Spleen (tissue), 13 donors: ENCODE measurements at regions of chr18 and their contacts with region 1.

Region 1: GRCh38 chr18:55433648-55434047 is 154.3 kb downstream of the TCF4 start:
- DNase-seq: no peak
- H3K4me3 ChIP-seq: no peak overlapping the region
- H3K27ac ChIP-seq: no peak overlapping the region
- H3K4me1 ChIP-seq: peaks cover 0 to 11% (median 2%) of the 10 kb centered on the region in 6 donors
- H3K27me3 ChIP-seq: no peaks in the 10 kb centered on the region
- CTCF ChIP-seq: no peak
- POLR2A ChIP-seq: no peak

Region 2: DNA sequence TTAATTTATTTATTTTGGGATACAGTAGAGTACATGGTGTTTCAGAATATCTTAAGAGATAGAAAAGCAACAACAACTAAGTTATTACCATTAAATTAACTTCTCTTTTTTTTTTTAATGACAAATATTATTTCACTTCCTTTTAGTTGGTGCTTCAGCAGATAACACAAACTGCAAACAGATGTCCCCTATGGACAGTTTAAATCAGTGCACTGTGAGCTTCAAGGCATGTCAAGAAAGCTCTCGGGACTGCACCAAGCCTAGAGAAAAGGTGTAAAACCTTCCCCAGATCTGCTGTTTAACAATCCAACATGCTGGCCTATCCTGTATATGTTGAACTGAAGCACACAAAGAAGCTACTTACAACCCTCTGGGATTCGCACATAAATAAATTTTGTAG is 31.7 kb after region 1 on chr18:
- intact Hi-C with region 1: loop called (anchors 5 kb)
- DNase-seq: no peak
- H3K4me3 ChIP-seq: no peak overlapping the region
- H3K27ac ChIP-seq: peak overlapping the region in 5 of 8 donors; percentile 16 to 52 (median 33)
- H3K4me1 ChIP-seq: peaks cover 0 to 21% (median 12%) of the 10 kb centered on the region in 6 donors
- H3K27me3 ChIP-seq: no peaks in the 10 kb centered on the region
- CTCF ChIP-seq: peak in 1 of 11 experiments; percentile 14
- POLR2A ChIP-seq: no peak

Region 3: DNA sequence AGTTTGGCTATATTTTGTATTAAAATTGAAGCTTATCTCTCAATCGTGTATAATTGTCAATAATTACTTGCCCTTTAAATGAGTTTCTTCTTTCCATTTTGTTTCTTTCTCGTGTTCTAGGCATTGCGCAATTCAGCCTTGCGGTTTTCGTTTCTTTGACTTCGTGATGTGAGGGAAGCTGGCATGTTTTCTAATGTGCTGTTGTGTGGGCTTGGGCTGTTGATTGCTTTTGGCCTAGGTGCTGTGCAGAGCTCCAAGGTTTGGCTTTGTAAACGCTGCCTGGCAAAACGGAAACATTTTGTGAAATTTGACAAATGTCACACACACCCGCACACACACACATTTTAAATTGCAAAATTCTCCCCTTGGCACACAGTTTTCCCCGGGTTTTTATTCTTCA is 396.9 kb after region 1 on chr18:
- intact Hi-C with region 1: no loop called
- DNase-seq: no peak
- H3K4me3 ChIP-seq: no peak overlapping the region
- H3K27ac ChIP-seq: no peak overlapping the region
- H3K4me1 ChIP-seq: no peaks in the 10 kb centered on the region
- H3K27me3 ChIP-seq: no peaks in the 10 kb centered on the region
- CTCF ChIP-seq: no peak
- POLR2A ChIP-seq: no peak